ENCODE measurements at regions of chr10 and their contacts with region 1.

Region 1: DNA sequence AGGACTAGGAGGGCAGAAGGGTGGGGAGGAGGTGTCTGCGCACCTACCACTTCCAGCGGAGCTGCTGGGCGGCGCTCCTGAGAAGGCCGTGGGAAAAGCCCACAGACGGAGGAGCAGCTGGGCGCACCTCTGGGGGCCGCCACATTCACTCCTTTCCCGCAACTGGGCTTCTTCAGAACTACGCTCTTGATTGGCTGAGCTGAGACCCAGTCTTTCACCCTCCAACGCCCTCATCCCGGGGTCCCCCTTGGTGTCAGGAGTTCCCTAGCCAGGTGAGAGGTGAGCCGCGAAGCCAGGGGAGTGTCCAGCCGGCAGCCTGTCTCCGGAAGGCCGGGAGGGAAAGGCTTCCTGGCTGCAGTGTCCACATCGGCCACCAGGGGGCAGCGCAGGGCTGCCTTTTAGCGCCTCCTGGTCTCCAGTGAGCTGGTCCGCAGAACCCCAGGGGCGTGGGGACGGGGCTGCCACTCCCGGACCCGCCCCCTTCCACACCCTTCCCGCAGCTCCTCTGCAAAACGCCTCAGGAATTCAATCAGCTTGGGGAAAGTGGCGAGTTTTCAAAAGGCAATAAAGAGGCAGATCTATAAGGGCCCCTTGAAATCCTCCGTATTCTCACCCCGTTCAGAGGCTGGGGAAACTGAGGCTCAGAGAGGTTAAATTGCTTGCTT is 98.8 kb downstream of the CHST15 start:
- DNase-seq: peak; percentile 83
- H3K4me3 Mint-ChIP-seq: no peak overlapping the region
- H3K27ac Mint-ChIP-seq: no peak overlapping the region
- H3K4me1 Mint-ChIP-seq: peaks cover 11% of the 10 kb centered on the region
- H3K27me3 Mint-ChIP-seq: peaks cover 52% of the 10 kb centered on the region

Region 2: GRCh38 chr10:123417414-123417813 is 577.1 kb before region 1 on chr10:
- CTCF ChIA-PET with region 1: no interaction called
- intact Hi-C with region 1: no loop called
- DNase-seq: no peak
- H3K4me3 Mint-ChIP-seq: no peak overlapping the region
- H3K27ac Mint-ChIP-seq: no peak overlapping the region
- H3K4me1 Mint-ChIP-seq: no peaks in the 10 kb centered on the region
- H3K27me3 Mint-ChIP-seq: peaks cover 4% of the 10 kb centered on the region

Region 3: GRCh38 chr10:124092860-124093773 is 98.6 kb after region 1 on chr10 and contains the start of gene CHST15:
- CTCF ChIA-PET with region 1: interaction called, 6 read pairs
- intact Hi-C with region 1: loop called (anchors 5 kb)
- DNase-seq: peak; percentile 12
- H3K4me3 Mint-ChIP-seq: peak within 1 kb of the TSS; percentile 58
- H3K27ac Mint-ChIP-seq: no peak within 1 kb of the TSS
- H3K4me1 Mint-ChIP-seq: peaks cover 2% of the 10 kb centered on the region
- H3K27me3 Mint-ChIP-seq: peaks cover 55% of the 10 kb centered on the region
- total RNA-seq, gene CHST15: 0.47 to 0.50 TPM

Region 4: GRCh38 chr10:124221356-124222317 is 227.1 kb after region 1 on chr10:
- CTCF ChIA-PET with region 1: interaction called, 6 read pairs
- intact Hi-C with region 1: loop called (anchors 10 kb)
- DNase-seq: no peak
- H3K4me3 Mint-ChIP-seq: no peak overlapping the region
- H3K27ac Mint-ChIP-seq: no peak overlapping the region
- H3K4me1 Mint-ChIP-seq: no peaks in the 10 kb centered on the region
- H3K27me3 Mint-ChIP-seq: no peaks in the 10 kb centered on the region

Region 5: DNA sequence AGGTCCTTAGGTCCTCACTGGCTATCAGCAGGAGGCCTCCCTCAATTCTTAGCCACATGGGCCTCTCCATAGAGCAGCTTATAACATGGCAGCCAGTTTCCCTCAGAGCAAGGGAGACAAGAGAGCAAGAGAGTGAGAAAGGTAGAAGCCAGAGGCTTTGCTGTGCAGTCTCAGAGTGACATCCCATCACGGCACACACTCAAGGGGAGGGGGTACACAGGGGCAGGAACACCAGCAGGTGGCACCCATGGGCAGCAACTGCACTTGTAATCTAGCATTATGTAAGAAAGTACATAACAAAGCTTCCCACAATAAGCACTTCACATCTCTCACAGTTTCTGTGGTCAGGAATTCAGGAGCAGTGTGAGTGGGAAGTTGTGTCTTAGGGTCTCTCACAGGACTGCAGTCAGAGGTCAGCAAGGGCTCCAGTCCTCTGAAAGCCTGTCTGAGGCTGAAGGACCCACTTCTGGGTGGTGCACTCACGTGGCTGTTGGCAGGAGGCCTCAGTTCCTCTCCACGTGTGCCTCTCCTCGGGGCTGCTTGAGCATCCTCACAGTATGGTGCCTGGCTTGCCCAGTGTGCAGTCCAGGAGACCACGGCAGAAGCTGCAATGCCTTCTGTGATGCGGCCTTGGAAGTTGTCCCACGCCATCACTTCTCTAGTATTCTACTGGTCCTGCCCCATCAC is 264.7 kb after region 1 on chr10:
- CTCF ChIA-PET with region 1: interaction called, 7 read pairs
- intact Hi-C with region 1: loop called (anchors 2 kb)
- DNase-seq: peak; percentile 33
- H3K4me3 Mint-ChIP-seq: no peak overlapping the region
- H3K27ac Mint-ChIP-seq: no peak overlapping the region
- H3K4me1 Mint-ChIP-seq: no peaks in the 10 kb centered on the region
- H3K27me3 Mint-ChIP-seq: no peaks in the 10 kb centered on the region

Region 6: GRCh38 chr10:124394583-124394982 is 400.0 kb after region 1 on chr10:
- CTCF ChIA-PET with region 1: interaction called, 123 read pairs
- intact Hi-C with region 1: loop called (anchors 1 kb)
- DNase-seq: no peak
- H3K4me3 Mint-ChIP-seq: no peak overlapping the region
- H3K27ac Mint-ChIP-seq: no peak overlapping the region
- H3K4me1 Mint-ChIP-seq: no peaks in the 10 kb centered on the region
- H3K27me3 Mint-ChIP-seq: no peaks in the 10 kb centered on the region

Region 7: GRCh38 chr10:124436191-124436638 is 441.7 kb after region 1 on chr10:
- CTCF ChIA-PET with region 1: no interaction called
- intact Hi-C with region 1: no loop called
- DNase-seq: no peak
- H3K4me3 Mint-ChIP-seq: no peak overlapping the region
- H3K27ac Mint-ChIP-seq: no peak overlapping the region
- H3K4me1 Mint-ChIP-seq: no peaks in the 10 kb centered on the region
- H3K27me3 Mint-ChIP-seq: peaks cover 5% of the 10 kb centered on the region

Region 8: GRCh38 chr10:124530215-124530665 is 535.7 kb after region 1 on chr10:
- CTCF ChIA-PET with region 1: interaction called, 3 read pairs
- intact Hi-C with region 1: loop called (anchors 10 kb)
- DNase-seq: peak; percentile 91
- H3K4me3 Mint-ChIP-seq: no peak overlapping the region
- H3K27ac Mint-ChIP-seq: no peak overlapping the region
- H3K4me1 Mint-ChIP-seq: peaks cover 5% of the 10 kb centered on the region
- H3K27me3 Mint-ChIP-seq: no peaks in the 10 kb centered on the region

Measured in activated naive CD4-positive, alpha-beta T cell treated with anti-CD3 and anti-CD28 coated beads for 36 hours (primary cell).